Posterior vena cava (tissue), 2 donors: ENCODE measurements at regions of chr10 and their contacts with region 1.

Region 1: DNA sequence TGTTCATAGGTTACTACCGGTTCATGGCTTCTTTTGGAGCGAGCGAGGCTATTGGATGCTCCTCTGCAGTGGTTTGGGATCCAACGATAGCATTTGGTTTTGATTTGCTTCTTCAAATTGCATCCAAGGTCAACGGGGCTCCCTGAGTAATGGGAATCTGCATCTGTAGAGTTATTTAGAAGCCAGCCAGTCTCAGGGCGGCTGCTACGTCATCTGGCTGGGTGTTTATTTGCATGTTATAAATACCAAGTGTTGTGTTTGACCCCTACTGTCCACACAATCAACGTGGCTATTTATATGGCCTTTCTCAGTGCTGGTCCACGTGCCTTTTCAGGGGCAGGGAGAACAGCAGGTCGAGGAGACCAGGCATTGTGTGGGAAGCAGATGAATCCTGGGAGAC is 137.7 kb downstream of the PRPF18 start:
- DNase-seq: no peak

Region 2: GRCh38 chr10:11934262-11934661 is 1790.2 kb before region 1 on chr10:
- intact Hi-C with region 1: loop called in 1 of 2 experiments (anchors 10 kb)
- DNase-seq: no peak

Region 3: GRCh38 chr10:13257621-13258140 is 466.8 kb before region 1 on chr10:
- intact Hi-C with region 1: loop called in 1 of 2 experiments (anchors 10 kb)
- DNase-seq: no peak

Region 4: GRCh38 chr10:13877154-13877909 is 152.8 kb after region 1 on chr10:
- intact Hi-C with region 1: no loop called
- DNase-seq: peak; percentile 91